H1 (cell line): ENCODE measurements at regions of chr19 and their contacts with region 1.

Region 1: DNA sequence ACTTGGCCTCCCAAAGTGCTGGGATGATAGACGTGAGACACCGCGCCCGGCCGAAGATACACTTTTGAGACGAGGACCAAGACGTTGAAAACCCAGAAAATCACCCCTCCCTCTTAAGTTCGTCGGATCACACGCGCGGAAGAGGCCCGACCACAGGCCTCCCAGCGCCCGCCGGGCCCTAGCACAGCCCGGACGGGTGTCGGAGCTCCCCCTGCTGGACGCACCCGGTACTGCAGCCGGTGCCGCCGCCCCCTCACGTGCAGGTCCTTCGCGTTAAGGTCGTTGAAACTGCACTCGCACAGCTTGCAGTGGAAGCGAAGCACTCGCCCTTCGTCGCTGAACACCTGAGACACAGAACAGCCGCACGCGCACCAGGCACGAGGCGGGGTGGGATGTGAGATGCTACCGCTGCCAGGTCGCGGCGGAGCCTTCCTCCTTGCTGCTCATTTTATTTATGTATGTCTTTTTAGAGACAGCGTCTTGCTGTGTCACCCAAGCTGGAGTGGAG is 35.7 kb upstream of the MATK start:
- DNase-seq: peak; percentile 51 to 99
- H3K4me3 ChIP-seq: no peak overlapping the region
- H3K27ac ChIP-seq: no peak overlapping the region
- H3K4me1 ChIP-seq: no peaks in the 10 kb centered on the region; a peak in 1 of 7 replicates
- H3K27me3 ChIP-seq: peaks cover 0 to 5% (median under 1%) of the 10 kb centered on the region in 4 experiments; a peak in 3 of 7 replicates
- CTCF ChIP-seq: peak; percentile 93 to 100 (median 99)
- EP300 ChIP-seq: 0 out of 3 replicates have a peak, but pooled peaks of 1 of the 2 experiments have one; percentile 21
- POLR2A ChIP-seq: no peak
- RAD21 ChIP-seq: peak; percentile 73 to 82

Region 2: DNA sequence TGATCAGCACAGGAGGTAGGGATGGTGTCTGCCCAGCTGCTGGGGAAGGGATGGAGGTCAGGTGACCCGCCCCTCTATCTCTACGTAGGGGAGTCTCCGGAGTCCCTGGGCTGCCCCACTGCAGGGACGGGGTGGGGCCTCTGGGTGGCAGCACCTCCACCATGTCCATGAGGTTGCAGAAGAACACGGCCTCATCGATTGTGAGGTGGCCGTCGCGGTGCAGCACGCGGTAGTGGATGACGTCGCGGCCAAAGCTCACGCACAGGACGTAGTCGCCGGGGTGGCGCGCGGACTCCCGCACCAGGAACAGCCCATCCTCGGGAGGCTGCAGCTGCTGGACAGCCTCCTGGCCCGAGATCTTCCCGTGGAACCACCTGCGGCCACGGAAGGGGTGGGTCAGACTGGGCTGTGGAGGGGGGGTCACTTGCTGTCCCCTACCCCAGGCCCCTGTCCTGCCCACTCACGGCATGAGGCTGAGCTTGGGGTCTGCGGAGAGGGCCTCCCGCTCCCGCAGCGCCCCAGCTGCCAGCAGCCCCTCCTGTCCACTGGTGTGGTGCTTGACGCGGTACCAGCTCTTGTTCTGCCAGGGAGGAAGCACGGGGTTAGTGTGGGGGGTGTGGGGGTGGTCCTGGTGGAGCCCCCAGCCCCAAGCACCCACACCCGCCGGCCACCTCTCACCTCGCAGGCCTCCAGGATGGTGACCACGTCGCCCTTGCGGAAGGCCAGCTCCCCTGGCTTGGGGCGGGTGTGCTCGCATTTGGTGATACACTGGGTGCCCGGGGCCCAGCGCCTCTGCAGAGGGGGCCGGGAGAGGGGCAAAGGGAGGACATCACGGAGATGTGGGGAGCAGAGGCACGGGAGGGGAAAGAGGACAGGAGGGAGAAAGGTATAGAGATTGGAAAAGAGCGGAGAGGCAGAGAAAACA is 38.0 kb before region 1 on chr19:
- CTCF ChIA-PET with region 1: interaction called, 15 read pairs
- POLR2A ChIA-PET with region 1: interaction called, 3 read pairs
- DNase-seq: peak in 1 of 2 experiments; percentile 79
- H3K4me3 ChIP-seq: no peak overlapping the region
- H3K27ac ChIP-seq: no peak overlapping the region
- H3K4me1 ChIP-seq: peaks cover 0 to 9% (median 1%) of the 10 kb centered on the region in 4 experiments; a peak in 3 of 7 replicates
- H3K27me3 ChIP-seq: peaks cover 0 to 17% (median 7%) of the 10 kb centered on the region in 4 experiments; a peak in 6 of 7 replicates
- CTCF ChIP-seq: peak; percentile 68 to 87 (median 85)
- EP300 ChIP-seq: no peak
- POLR2A ChIP-seq: no peak
- RAD21 ChIP-seq: peak; percentile 68 to 81

Region 3: DNA sequence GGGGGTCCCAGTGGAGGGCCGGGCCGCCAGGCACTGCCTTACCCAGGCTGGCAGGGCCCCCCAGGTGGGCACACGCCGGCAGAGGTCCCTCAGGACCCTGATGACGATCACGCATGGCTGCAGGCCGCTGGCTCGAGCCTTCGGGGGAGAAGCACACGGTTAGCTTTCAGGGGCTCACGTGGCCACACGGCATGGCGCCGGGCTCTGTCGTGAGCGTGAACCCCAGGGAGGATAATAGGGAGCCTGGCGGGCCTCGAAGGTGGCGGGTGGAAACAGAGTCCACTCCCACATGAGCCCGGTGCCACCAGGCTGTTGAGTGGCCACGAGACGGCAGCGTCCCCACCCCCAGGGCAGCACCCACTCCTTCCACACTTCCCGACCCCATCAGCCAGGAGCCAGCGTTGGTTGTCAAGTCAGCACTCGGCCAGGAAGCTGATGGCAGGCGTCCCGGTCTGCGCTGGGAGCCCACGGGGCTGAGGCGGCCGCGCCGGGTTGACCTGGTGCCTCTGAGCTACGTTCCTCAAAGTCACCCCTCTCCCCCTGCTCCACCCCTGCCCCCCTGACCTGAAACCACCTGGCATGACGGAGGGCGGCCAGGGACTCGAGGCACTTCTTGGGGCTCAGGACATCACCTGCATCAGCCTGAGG is 11.1 kb before region 1 on chr19:
- CTCF ChIA-PET with region 1: interaction called, 19 read pairs
- POLR2A ChIA-PET with region 1: interaction called, 7 read pairs
- DNase-seq: no peak
- H3K4me3 ChIP-seq: no peak overlapping the region
- H3K27ac ChIP-seq: no peak overlapping the region
- H3K4me1 ChIP-seq: no peaks in the 10 kb centered on the region; a peak in 1 of 7 replicates
- H3K27me3 ChIP-seq: no peaks in the 10 kb centered on the region
- CTCF ChIP-seq: no peak
- EP300 ChIP-seq: no peak
- POLR2A ChIP-seq: no peak
- RAD21 ChIP-seq: no peak

Region 4: GRCh38 chr19:3838661-3839060 is 16.8 kb after region 1 on chr19:
- CTCF ChIA-PET with region 1: interaction called, 11 read pairs
- POLR2A ChIA-PET with region 1: interaction called, 3 read pairs
- DNase-seq: no peak
- H3K4me3 ChIP-seq: no peak overlapping the region
- H3K27ac ChIP-seq: no peak overlapping the region
- H3K4me1 ChIP-seq: no peaks in the 10 kb centered on the region
- H3K27me3 ChIP-seq: no peaks in the 10 kb centered on the region
- CTCF ChIP-seq: no peak
- EP300 ChIP-seq: no peak
- POLR2A ChIP-seq: no peak
- RAD21 ChIP-seq: no peak

Region 5: DNA sequence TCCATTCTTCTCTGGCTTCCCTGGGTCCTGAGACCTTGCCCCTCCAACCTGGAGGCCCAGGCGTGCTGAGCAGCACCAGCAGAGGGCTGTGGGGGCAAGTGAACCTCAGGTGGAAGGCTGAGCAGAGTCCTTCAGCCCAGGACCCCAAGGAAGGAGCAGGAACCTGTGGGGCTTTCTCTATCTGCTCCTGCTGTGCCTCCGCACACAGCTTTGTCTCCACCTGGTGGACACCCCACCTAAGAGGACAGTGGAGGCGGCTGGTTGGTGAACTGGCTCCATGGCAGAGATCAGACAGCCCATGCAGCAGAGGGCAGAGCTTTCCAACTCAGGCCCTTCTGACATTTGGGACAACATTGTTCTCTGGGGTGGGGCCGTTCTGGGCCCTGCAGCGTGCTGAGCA is 27.2 kb after region 1 on chr19:
- CTCF ChIA-PET with region 1: interaction called, 13 read pairs
- POLR2A ChIA-PET with region 1: interaction called, 3 read pairs
- DNase-seq: no peak
- H3K4me3 ChIP-seq: no peak overlapping the region
- H3K27ac ChIP-seq: no peak overlapping the region
- H3K4me1 ChIP-seq: no peaks in the 10 kb centered on the region
- H3K27me3 ChIP-seq: no peaks in the 10 kb centered on the region
- CTCF ChIP-seq: peak; percentile 56 to 75 (median 71)
- EP300 ChIP-seq: no peak
- POLR2A ChIP-seq: no peak
- RAD21 ChIP-seq: peak; percentile 41 to 63; a peak in 3 of 4 replicates